Mammary epithelial cell (primary cell): ENCODE measurements at regions of chr2 and their contacts with region 1.

Region 1: DNA sequence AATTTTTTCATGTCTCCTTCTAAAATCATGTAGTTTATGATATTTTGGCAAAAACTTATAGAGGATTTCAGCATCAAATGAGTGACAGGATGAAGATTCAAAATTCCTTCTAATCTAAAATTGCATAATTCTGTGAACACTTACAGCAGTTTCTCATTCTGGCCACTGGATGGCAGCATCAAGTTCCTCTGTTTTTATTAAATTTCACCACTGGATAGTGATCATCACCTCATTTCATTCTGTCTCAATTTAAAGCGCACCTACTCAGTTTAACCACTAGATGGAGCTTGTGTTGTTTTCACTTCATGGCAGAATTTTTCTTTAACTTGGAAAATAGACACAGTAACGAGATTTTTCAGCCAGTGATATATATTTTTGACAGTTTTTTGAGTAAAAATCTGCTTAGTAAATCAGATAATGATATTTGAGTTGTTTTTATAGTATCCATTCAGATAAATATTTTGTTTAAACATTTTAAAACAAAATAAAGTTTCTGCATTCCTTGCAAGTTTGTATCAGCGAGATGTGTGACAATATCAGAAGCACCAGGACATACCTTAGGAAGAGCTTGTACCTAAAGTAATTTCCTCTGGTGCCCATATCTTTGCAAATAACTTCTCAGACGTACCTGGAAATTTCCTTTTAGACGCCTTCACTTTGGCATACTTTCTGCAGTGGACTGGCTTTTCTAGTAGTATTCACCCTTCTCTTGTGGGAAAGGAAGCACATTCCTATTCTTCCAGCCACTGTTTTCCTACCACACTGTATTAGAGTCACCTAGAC is 94.7 kb upstream of the ARHGAP15 start:
- DNase-seq: peak; percentile 73
- H3K4me3 ChIP-seq: no peak overlapping the region
- H3K27ac ChIP-seq: no peak overlapping the region
- H3K4me1 ChIP-seq: no peaks in the 10 kb centered on the region
- H3K27me3 ChIP-seq: no peaks in the 10 kb centered on the region
- CTCF ChIP-seq: peak; percentile 82 to 98

Region 2: DNA sequence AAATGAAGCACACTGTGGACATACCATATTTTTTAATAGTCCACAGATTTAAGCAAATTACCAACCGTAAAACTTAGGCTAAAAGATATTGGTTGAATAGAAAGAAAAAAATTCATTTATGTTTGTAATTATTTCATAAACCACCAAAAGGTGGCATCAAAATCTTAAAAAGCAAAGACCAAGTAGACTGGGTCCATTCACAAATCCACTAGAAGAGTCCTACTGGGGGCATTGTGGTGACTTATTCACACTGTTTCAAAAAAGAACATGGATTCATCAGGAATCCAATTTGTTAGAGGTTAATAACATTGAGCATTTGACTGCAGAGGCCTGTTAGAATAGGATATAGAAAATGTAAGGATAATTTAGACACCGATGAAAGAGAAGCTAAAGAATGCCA is 352.0 kb before region 1 on chr2:
- CTCF ChIA-PET with region 1: no interaction called
- dilution Hi-C with region 1: no loop called
- in situ Hi-C with region 1: no loop called
- intact Hi-C with region 1: no loop called
- DNase-seq: peak; percentile 17
- H3K4me3 ChIP-seq: no peak overlapping the region
- H3K27ac ChIP-seq: no peak overlapping the region
- H3K4me1 ChIP-seq: no peaks in the 10 kb centered on the region
- H3K27me3 ChIP-seq: no peaks in the 10 kb centered on the region
- CTCF ChIP-seq: peak; percentile 14 to 45

Region 3: DNA sequence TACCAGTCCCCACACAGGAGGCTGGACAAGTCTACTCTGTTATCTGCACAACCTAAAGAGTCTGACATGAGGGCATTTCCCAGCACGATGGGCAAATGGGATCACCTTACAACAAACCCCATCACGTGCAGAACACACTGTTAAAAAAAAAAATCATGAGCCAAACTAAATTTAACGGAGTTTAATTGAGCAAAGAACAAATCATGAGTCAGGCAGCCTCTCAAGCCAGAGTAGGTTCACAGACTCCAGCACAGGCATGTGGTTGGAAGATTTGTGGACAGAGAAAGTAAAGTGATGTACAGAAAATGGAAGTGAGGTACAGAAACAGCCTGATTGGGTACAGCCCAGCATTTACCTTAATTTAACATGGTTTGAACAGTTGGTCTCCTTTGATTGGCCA is 97.1 kb before region 1 on chr2:
- CTCF ChIA-PET with region 1: no interaction called
- dilution Hi-C with region 1: no loop called
- in situ Hi-C with region 1: no loop called
- intact Hi-C with region 1: no loop called
- DNase-seq: no peak
- H3K4me3 ChIP-seq: no peak overlapping the region
- H3K27ac ChIP-seq: no peak overlapping the region
- H3K4me1 ChIP-seq: no peaks in the 10 kb centered on the region
- H3K27me3 ChIP-seq: no peaks in the 10 kb centered on the region
- CTCF ChIP-seq: no peak

Region 4: DNA sequence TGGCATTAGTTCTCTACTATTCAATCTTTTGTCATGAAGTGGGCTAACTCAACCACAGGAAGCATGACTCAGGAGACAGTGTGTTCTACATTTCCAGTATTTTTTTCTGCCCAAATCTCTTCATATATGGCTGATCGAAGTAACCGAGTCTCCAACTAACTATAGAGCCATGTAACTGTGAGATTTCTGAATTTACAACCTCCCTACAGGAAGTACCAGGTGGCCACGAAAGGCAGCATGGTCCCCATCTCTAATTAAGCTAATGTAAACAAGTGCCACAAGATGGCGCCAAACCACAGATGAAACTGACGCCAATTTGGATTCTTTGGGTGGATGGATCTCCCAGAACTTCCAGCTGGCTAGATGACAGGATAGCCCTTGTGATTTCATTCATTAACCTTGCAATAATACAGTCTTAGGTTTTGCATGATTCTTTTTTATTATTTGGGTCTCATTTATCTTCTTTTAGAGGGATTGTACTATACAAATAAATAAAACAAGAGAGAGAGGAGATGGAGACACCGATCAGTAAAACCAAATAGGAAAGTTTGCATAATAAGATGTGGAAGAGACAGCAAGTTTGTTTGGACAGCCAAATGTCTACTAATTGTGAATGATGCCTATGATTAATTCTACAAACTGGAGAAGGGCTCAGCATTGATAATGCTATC is 76.4 kb after region 1 on chr2:
- CTCF ChIA-PET with region 1: interaction called, 5 read pairs
- dilution Hi-C with region 1: no loop called
- in situ Hi-C with region 1: no loop called
- intact Hi-C with region 1: loop called (anchors 1 kb)
- DNase-seq: peak; percentile 45
- H3K4me3 ChIP-seq: no peak overlapping the region
- H3K27ac ChIP-seq: no peak overlapping the region
- H3K4me1 ChIP-seq: peaks cover 7% of the 10 kb centered on the region
- H3K27me3 ChIP-seq: no peaks in the 10 kb centered on the region
- CTCF ChIP-seq: peak; percentile 70 to 74

Region 5: GRCh38 chr2:143128681-143129580 is 94.4 kb after region 1 on chr2 and contains the start of gene ARHGAP15:
- CTCF ChIA-PET with region 1: no interaction called
- dilution Hi-C with region 1: no loop called
- in situ Hi-C with region 1: no loop called
- intact Hi-C with region 1: no loop called
- DNase-seq: no peak
- H3K4me3 ChIP-seq: no peak within 1 kb of the TSS
- H3K27ac ChIP-seq: no peak within 1 kb of the TSS
- H3K4me1 ChIP-seq: no peaks in the 10 kb centered on the region
- H3K27me3 ChIP-seq: no peaks in the 10 kb centered on the region
- CTCF ChIP-seq: no peak
- total RNA-seq, gene ARHGAP15: not detected

Region 6: GRCh38 chr2:143162123-143162837 is 127.8 kb after region 1 on chr2:
- CTCF ChIA-PET with region 1: interaction called, 5 read pairs
- dilution Hi-C with region 1: no loop called
- in situ Hi-C with region 1: no loop called
- intact Hi-C with region 1: loop called (anchors 1 kb)
- DNase-seq: peak; percentile 21
- H3K4me3 ChIP-seq: no peak overlapping the region
- H3K27ac ChIP-seq: no peak overlapping the region
- H3K4me1 ChIP-seq: no peaks in the 10 kb centered on the region
- H3K27me3 ChIP-seq: peaks cover 2% of the 10 kb centered on the region
- CTCF ChIP-seq: peak; percentile 45 to 64

Region 7: DNA sequence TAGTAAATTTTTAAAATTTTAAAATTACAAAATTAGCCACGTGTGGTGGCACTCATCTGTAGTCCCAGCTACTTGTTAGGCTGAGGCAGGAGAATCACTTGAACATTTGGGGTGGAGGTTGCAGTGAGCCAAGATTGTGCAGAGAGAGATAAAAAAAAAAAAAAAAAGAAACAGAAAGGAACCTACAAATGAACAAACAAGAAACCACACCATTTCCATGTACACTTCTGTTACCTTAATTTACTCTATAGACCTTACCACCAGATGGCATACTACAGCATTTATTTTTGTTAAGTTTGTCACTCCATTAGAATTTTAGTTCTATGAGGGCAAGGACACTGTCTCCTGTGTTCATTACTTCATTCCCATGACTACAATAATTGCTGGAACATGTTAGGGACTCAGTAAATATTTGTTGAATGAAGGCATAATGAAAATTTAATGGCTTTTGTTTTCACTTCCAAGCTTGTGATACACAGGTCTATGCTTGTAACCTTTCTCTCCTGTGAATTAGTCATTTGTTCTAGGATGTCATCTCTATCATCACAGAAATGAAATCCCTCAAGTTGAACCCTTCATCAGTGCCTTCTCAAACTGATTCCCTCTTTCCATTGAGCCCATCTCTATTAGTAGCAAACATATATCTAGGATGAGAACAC is 170.8 kb after region 1 on chr2:
- CTCF ChIA-PET with region 1: no interaction called
- dilution Hi-C with region 1: no loop called
- in situ Hi-C with region 1: loop called in 1 of 2 experiments (anchors 25 kb)
- intact Hi-C with region 1: no loop called
- DNase-seq: peak; percentile 50
- H3K4me3 ChIP-seq: no peak overlapping the region
- H3K27ac ChIP-seq: no peak overlapping the region
- H3K4me1 ChIP-seq: no peaks in the 10 kb centered on the region
- H3K27me3 ChIP-seq: no peaks in the 10 kb centered on the region
- CTCF ChIP-seq: peak; percentile 27 to 46

Region 8: DNA sequence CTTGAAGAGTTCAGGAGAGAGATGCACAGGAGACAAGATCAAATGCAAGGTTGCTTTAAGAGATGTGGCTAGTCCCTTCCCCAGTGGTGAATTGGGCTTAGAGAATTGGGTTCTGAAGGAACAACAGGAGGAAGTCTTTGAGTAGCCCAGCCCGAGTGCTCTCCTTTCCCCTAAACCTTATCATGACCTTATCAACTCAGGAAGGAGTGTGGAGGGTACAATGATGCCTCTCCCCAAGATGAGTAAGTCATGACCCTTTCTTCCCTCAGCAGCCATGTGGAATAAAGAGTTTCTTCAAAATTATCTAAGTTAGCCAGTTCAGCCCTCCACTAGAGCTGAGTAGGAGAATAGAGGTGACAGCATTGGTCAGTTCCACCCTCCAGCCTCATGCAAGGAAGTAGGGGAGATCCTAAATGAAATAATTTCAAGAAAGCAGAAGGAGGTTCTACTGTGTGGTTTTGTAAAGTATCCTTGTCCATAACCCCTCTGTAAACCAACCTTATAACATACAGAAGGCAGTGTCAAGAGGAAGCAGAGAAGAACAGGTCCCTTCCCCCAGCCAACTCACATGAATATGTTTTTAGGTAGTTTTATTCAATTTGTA is 183.1 kb after region 1 on chr2:
- CTCF ChIA-PET with region 1: interaction called, 16 read pairs
- dilution Hi-C with region 1: no loop called
- in situ Hi-C with region 1: loop called in 1 of 2 experiments (anchors 25 kb)
- intact Hi-C with region 1: loop called (anchors 1 kb)
- DNase-seq: no peak
- H3K4me3 ChIP-seq: no peak overlapping the region
- H3K27ac ChIP-seq: no peak overlapping the region
- H3K4me1 ChIP-seq: no peaks in the 10 kb centered on the region
- H3K27me3 ChIP-seq: no peaks in the 10 kb centered on the region
- CTCF ChIP-seq: no peak

Region 9: GRCh38 chr2:143246815-143247744 is 212.6 kb after region 1 on chr2:
- CTCF ChIA-PET with region 1: no interaction called
- dilution Hi-C with region 1: no loop called
- in situ Hi-C with region 1: loop called in 1 of 2 experiments (anchors 25 kb)
- intact Hi-C with region 1: no loop called
- DNase-seq: no peak
- H3K4me3 ChIP-seq: no peak overlapping the region
- H3K27ac ChIP-seq: no peak overlapping the region
- H3K4me1 ChIP-seq: no peaks in the 10 kb centered on the region
- H3K27me3 ChIP-seq: peaks cover 6% of the 10 kb centered on the region
- CTCF ChIP-seq: no peak

Region 10: GRCh38 chr2:143259368-143259958 is 225.0 kb after region 1 on chr2:
- CTCF ChIA-PET with region 1: no interaction called
- dilution Hi-C with region 1: no loop called
- in situ Hi-C with region 1: no loop called
- intact Hi-C with region 1: loop called (anchors 1 kb)
- DNase-seq: peak; percentile 38
- H3K4me3 ChIP-seq: no peak overlapping the region
- H3K27ac ChIP-seq: no peak overlapping the region
- H3K4me1 ChIP-seq: no peaks in the 10 kb centered on the region
- H3K27me3 ChIP-seq: peaks cover 2% of the 10 kb centered on the region
- CTCF ChIP-seq: peak; percentile 75 to 87